ENCODE measurements at regions of chr1 and their contacts with region 1.

Region 1: DNA sequence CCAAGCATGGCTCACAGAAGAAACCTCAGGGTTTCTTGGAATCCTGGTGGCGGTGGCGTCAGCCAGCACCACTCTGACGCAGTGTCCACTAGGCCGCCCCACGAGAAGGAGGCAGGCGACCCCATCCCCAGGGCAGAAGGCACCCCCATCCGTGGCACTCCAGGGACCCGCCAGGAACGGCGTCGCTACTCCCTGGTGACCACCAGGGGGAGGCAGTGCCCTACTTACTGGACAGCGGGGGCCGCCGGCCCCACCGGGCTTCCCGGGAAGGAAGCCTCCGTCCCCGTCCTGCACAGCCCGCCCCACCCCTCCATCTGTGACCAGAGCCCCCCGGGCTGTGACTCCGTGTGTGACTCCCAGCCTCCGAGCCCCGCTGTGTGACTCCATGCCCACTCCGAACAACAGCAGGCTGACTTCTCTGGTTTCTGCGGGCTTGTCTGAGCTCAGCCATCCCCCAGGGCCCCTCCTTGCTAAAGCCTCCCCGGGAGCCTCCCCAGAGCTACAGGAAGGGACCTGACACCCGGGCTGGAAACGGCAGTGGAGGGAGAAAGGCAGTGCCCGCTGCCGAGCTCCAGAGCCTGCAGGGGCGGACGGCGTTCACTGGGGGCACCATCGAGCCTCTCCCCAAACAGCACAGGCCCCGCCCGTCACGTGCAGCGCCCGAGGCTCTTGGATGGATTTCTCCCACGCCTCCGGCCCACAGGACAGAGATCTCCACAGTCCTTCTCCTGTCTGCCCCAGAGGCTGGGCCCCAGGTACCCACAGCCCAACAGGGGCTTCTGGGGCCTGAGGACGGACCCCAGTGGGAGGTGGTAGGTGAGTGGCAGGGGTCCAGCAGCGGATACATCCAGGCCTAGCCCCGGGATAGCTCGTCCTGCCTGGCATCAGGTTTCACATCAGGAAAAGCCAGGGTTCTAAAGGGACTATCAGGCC is 21.1 kb downstream of the KIF17 start:
- DNase-seq: peak; percentile 84 to 86
- ATAC-seq: peak; percentile 91 to 96 (median 93)
- H3K4me3 ChIP-seq: peak overlapping the region; percentile 44 to 67 (median 58)
- H3K27ac ChIP-seq: peak overlapping the region; percentile 51 to 87 (median 74)
- H3K4me1 ChIP-seq: peaks cover 0 to 17% (median 11%) of the 10 kb centered on the region in 9 donors
- H3K27me3 ChIP-seq: no peaks in the 10 kb centered on the region
- CTCF ChIP-seq: peak; percentile 84 to 95 (median 88)

Region 2: DNA sequence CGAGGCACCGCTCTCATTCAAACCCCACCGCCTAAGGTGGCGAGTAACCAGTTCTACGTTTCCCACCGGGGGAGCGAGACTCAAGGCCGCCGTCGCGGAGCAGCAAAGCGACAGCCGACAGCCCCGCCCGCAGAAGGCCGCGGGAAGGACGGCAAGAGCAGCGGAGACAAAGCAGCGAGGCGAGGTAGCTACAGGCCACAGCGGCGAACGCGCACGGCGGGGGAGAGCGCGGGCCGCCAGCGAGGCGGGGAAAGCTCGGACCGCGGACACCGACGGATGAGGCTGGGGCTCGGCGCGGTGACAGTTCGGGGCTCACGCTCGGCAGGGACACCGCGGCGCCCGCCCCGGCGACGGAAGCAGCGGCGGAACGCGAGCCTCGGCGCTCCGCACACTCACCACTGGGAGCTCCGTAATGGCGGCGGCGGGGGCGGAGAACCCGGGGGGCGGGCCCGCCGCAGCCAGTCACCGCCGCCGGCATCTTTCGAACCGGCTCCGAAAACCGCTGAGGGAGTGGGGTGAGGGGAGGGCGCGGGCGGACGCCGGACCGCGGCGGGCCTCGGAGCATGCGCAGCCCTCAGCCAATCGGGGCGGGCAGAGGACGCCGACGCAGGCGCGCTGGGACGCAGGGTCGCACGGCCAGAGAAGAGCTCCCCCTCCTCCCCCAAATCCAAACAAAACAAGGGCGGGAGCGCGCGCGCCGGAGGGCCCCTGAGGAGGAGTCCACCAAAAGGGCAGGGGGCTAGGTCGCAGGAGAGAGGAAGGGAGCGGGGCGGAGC is 89.8 kb after region 1 on chr1:
- intact Hi-C with region 1: loop called in 1 of 10 experiments (anchors 10 kb)
- DNase-seq: peak; percentile 93 to 97
- ATAC-seq: peak; percentile 94 to 97 (median 96)
- H3K4me3 ChIP-seq: peak overlapping the region; percentile 63 to 99 (median 94)
- H3K27ac ChIP-seq: peak overlapping the region; percentile 90 to 99 (median 98)
- H3K4me1 ChIP-seq: peaks cover 0 to 52% (median 38%) of the 10 kb centered on the region in 9 donors
- H3K27me3 ChIP-seq: no peaks in the 10 kb centered on the region
- CTCF ChIP-seq: no peak

Region 3: GRCh38 chr1:21200767-21201166 is 504.1 kb after region 1 on chr1:
- intact Hi-C with region 1: loop called (anchors 1 to 5 kb)
- DNase-seq: no peak
- ATAC-seq: no peak
- H3K4me3 ChIP-seq: no peak overlapping the region
- H3K27ac ChIP-seq: no peak overlapping the region
- H3K4me1 ChIP-seq: no peaks in the 10 kb centered on the region
- H3K27me3 ChIP-seq: peaks cover 0 to 4% (median 0%) of the 10 kb centered on the region in 7 donors
- CTCF ChIP-seq: no peak

Measured in heart right ventricle (tissue), 16 donors.